B cell (primary cell): ENCODE measurements at regions of chr16 and their contacts with region 1.

Region 1: GRCh38 chr16:66977341-66978113 is 10.9 kb upstream of the CES4A start:
- DNase-seq: peak; percentile 87
- ATAC-seq: peak; percentile 98
- H3K4me3 ChIP-seq: no peak overlapping the region
- H3K4me3 Mint-ChIP-seq: no peak overlapping the region
- H3K27ac ChIP-seq: no peak overlapping the region
- H3K27ac Mint-ChIP-seq: peak overlapping the region; percentile 15
- H3K4me1 ChIP-seq: peaks cover 0 to 3% of the 10 kb centered on the region in 2 donors
- H3K4me1 Mint-ChIP-seq: peaks cover 1% of the 10 kb centered on the region
- H3K27me3 ChIP-seq: peaks cover 0 to 13% (median 0%) of the 10 kb centered on the region in 4 experiments
- H3K27me3 Mint-ChIP-seq: peaks cover 16% of the 10 kb centered on the region
- CTCF ChIP-seq: peak; percentile 93

Region 2: GRCh38 chr16:66872943-66873684 is 104.4 kb before region 1 on chr16:
- CTCF ChIA-PET with region 1: no interaction called
- POLR2A ChIA-PET with region 1: no interaction called
- intact Hi-C with region 1: no loop called
- DNase-seq: peak; percentile 91
- ATAC-seq: peak; percentile 90
- H3K4me3 ChIP-seq: peak overlapping the region in 4 of 5 experiments; percentile 32 to 45 (median 44)
- H3K4me3 Mint-ChIP-seq: peak overlapping the region; percentile 77
- H3K27ac ChIP-seq: no peak overlapping the region
- H3K27ac Mint-ChIP-seq: peak overlapping the region; percentile 72
- H3K4me1 ChIP-seq: peaks cover 7 to 11% of the 10 kb centered on the region in 2 donors
- H3K4me1 Mint-ChIP-seq: peaks cover 14% of the 10 kb centered on the region
- H3K27me3 ChIP-seq: peaks cover 0 to 1% (median 0%) of the 10 kb centered on the region in 4 experiments
- H3K27me3 Mint-ChIP-seq: peaks cover 3% of the 10 kb centered on the region
- CTCF ChIP-seq: peak; percentile 92

Region 3: GRCh38 chr16:66894948-66895688 is 82.4 kb before region 1 on chr16:
- CTCF ChIA-PET with region 1: no interaction called
- POLR2A ChIA-PET with region 1: no interaction called
- intact Hi-C with region 1: no loop called
- DNase-seq: peak; percentile 63
- ATAC-seq: peak; percentile 54
- H3K4me3 ChIP-seq: no peak overlapping the region
- H3K4me3 Mint-ChIP-seq: no peak overlapping the region
- H3K27ac ChIP-seq: no peak overlapping the region
- H3K27ac Mint-ChIP-seq: no peak overlapping the region
- H3K4me1 ChIP-seq: peaks cover 0 to 3% of the 10 kb centered on the region in 2 donors
- H3K4me1 Mint-ChIP-seq: no peaks in the 10 kb centered on the region
- H3K27me3 ChIP-seq: peaks cover 0 to under 1% (median 0%) of the 10 kb centered on the region in 4 experiments
- H3K27me3 Mint-ChIP-seq: no peaks in the 10 kb centered on the region
- CTCF ChIP-seq: peak; percentile 53

Region 4: GRCh38 chr16:67100569-67101310 is 123.2 kb after region 1 on chr16:
- CTCF ChIA-PET with region 1: interaction called, 4 read pairs
- POLR2A ChIA-PET with region 1: no interaction called
- intact Hi-C with region 1: loop called (anchors 2 kb)
- DNase-seq: peak; percentile 34
- ATAC-seq: no peak
- H3K4me3 ChIP-seq: no peak overlapping the region
- H3K4me3 Mint-ChIP-seq: no peak overlapping the region
- H3K27ac ChIP-seq: no peak overlapping the region
- H3K27ac Mint-ChIP-seq: no peak overlapping the region
- H3K4me1 ChIP-seq: peaks cover 10 to 12% of the 10 kb centered on the region in 2 donors
- H3K4me1 Mint-ChIP-seq: peaks cover 16% of the 10 kb centered on the region
- H3K27me3 ChIP-seq: no peaks in the 10 kb centered on the region
- H3K27me3 Mint-ChIP-seq: no peaks in the 10 kb centered on the region
- CTCF ChIP-seq: no peak

Region 5: GRCh38 chr16:67150833-67151396 is 173.4 kb after region 1 on chr16 and contains the start of gene B3GNT9:
- CTCF ChIA-PET with region 1: interaction called, 20 read pairs
- POLR2A ChIA-PET with region 1: interaction called, 4 read pairs
- intact Hi-C with region 1: loop called (anchors 1 kb)
- DNase-seq: peak; percentile 44
- ATAC-seq: no peak
- H3K4me3 ChIP-seq: peak within 1 kb of the TSS in 4 of 5 experiments; percentile 33 to 54 (median 44)
- H3K4me3 Mint-ChIP-seq: peak within 1 kb of the TSS; percentile 73
- H3K27ac ChIP-seq: no peak within 1 kb of the TSS
- H3K27ac Mint-ChIP-seq: no peak within 1 kb of the TSS
- H3K4me1 ChIP-seq: peaks cover 21 to 22% of the 10 kb centered on the region in 2 donors
- H3K4me1 Mint-ChIP-seq: peaks cover 24% of the 10 kb centered on the region
- H3K27me3 ChIP-seq: peaks cover 0 to 36% (median 10%) of the 10 kb centered on the region in 4 experiments
- H3K27me3 Mint-ChIP-seq: peaks cover 20% of the 10 kb centered on the region
- CTCF ChIP-seq: no peak
- total RNA-seq, gene B3GNT9: 1.2 and 1.6 TPM in 2 replicates

Region 6: DNA sequence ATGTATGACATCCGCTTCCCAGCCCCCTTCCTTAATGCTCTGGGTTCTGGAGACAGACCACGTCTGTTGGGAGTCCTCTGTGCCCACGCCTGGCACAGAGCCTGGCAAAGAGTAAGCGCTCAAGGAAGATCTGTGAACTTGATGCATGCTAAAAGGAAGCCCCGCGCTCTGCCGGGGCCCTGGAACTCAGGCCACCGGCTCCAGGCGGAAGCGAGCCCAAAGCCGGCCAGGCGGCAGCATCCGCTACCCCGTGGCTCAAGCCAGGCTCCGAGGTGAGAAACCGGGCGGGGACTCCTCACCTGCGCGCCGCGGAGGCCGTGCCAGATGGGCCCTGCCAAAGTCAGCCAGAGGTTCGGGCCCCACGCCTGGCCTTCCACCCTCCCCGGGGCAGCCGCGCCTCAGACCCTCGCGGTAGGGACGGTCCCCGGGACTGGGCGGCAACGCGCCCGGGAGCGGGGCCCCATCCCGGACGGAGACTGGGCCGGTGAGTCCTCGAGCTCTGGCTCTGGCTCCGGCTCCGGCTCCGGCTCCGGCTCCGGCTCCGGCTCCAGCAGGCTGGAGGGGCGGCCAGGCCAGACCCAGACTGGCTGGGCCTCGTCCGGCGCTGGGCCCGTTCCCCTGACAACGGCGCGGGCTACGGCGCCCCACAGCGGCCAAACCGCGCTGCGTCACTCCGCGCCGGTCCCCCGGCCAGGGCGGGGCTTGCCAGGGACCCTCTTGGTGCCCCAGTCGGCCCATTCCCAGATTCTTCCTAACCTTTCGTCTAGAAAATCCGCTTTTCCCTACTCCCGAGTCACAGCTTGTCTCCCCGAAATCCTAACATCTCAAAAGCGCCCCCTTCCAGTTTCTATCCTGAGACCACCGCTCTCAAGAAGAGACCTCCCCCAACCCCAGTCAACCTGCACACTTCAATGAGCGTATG is 438.6 kb after region 1 on chr16 and contains the start of gene ZDHHC1:
- CTCF ChIA-PET with region 1: no interaction called
- POLR2A ChIA-PET with region 1: no interaction called
- intact Hi-C with region 1: loop called (anchors 2 kb)
- DNase-seq: peak; percentile 73
- ATAC-seq: peak; percentile 97
- H3K4me3 ChIP-seq: peak within 1 kb of the TSS; percentile 25 to 69 (median 64)
- H3K4me3 Mint-ChIP-seq: peak within 1 kb of the TSS; percentile 89
- H3K27ac ChIP-seq: peak within 1 kb of the TSS in 1 of 2 donors; percentile 70
- H3K27ac Mint-ChIP-seq: no peak within 1 kb of the TSS
- H3K4me1 ChIP-seq: peaks cover 8 to 11% of the 10 kb centered on the region in 2 donors
- H3K4me1 Mint-ChIP-seq: peaks cover 12% of the 10 kb centered on the region
- H3K27me3 ChIP-seq: peaks cover 0 to 13% (median 5%) of the 10 kb centered on the region in 4 experiments
- H3K27me3 Mint-ChIP-seq: peaks cover 15% of the 10 kb centered on the region
- CTCF ChIP-seq: peak; percentile 67
- total RNA-seq, gene ZDHHC1: 2.4 and 2.8 TPM in 2 replicates